HAP-1 (cell line): ENCODE measurements at regions of chr19 and their contacts with region 1.

Region 1: GRCh38 chr19:14078411-14078810 is 5.8 kb downstream of the MISP3 start:
- DNase-seq: no peak
- H3K4me3 ChIP-seq: no peak overlapping the region
- H3K4me1 ChIP-seq: peaks cover 7% of the 10 kb centered on the region
- H3K27me3 ChIP-seq: no peaks in the 10 kb centered on the region

Region 2: GRCh38 chr19:13880059-13881043 is 198.1 kb before region 1 on chr19:
- in situ Hi-C with region 1: loop called (anchors 5 kb)
- DNase-seq: peak; percentile 89 to 98
- H3K4me3 ChIP-seq: peak overlapping the region; percentile 11; the same call in 1 of the 2 replicates
- H3K4me1 ChIP-seq: peaks cover 9% of the 10 kb centered on the region
- H3K27me3 ChIP-seq: no peaks in the 10 kb centered on the region

Region 3: GRCh38 chr19:13978347-13978733 is 100.1 kb before region 1 on chr19:
- in situ Hi-C with region 1: no loop called
- DNase-seq: peak in 1 of 2 experiments; percentile 58
- H3K4me3 ChIP-seq: no peak overlapping the region
- H3K4me1 ChIP-seq: no peaks in the 10 kb centered on the region
- H3K27me3 ChIP-seq: no peaks in the 10 kb centered on the region

Region 4: DNA sequence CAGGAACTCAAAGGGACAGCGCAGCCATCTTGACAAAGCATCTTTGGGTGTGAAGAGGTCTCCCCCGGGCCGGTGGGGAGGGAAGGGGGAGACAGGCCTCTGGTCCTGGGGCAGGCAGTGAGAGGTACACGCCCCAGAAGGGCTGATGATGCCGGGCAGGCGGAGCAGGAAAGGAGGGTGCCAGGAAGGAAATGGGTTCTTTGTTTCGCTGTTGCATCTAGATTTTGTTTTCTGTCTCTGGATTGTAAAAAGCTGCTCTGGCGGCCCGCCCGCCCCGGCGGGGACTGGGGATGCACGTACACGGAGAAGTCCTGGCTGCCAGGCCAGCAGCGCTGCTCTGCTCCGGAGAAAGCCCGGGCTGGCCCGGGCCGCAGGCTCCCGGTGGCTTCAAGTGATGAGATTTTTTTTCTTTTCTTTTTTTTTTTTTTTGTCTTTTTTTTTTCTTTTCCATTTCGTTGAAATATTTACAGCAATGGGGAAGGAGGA is 71.1 kb after region 1 on chr19:
- in situ Hi-C with region 1: no loop called
- DNase-seq: no peak
- H3K4me3 ChIP-seq: no peak overlapping the region
- H3K4me1 ChIP-seq: peaks cover 7% of the 10 kb centered on the region
- H3K27me3 ChIP-seq: no peaks in the 10 kb centered on the region

Region 5: GRCh38 chr19:14614099-14614412 is 535.6 kb after region 1 on chr19:
- in situ Hi-C with region 1: no loop called
- DNase-seq: no peak
- H3K4me3 ChIP-seq: no peak overlapping the region
- H3K4me1 ChIP-seq: no peaks in the 10 kb centered on the region
- H3K27me3 ChIP-seq: no peaks in the 10 kb centered on the region